H1 (cell line): ENCODE measurements at regions of chr6 and their contacts with region 1.

Region 1: GRCh38 chr6:137589067-137589848 is 95.1 kb upstream of the OLIG3 start:
- DNase-seq: peak; percentile 38 to 65
- H3K4me3 ChIP-seq: no peak overlapping the region
- H3K27ac ChIP-seq: no peak overlapping the region
- H3K4me1 ChIP-seq: peaks cover 0 to 6% (median 5%) of the 10 kb centered on the region in 4 experiments; a peak in 4 of 7 replicates
- H3K27me3 ChIP-seq: no peaks in the 10 kb centered on the region; a peak in 1 of 7 replicates
- CTCF ChIP-seq: peak; percentile 55 to 100 (median 99)
- EP300 ChIP-seq: peak in 1 of 2 experiments; percentile 75; a peak in 1 of 3 replicates
- POLR2A ChIP-seq: no peak
- RAD21 ChIP-seq: peak; percentile 95 to 97

Region 2: GRCh38 chr6:137341681-137342195 is 247.5 kb before region 1 on chr6:
- CTCF ChIA-PET with region 1: interaction called, 16 read pairs
- POLR2A ChIA-PET with region 1: no interaction called
- DNase-seq: no peak
- H3K4me3 ChIP-seq: no peak overlapping the region
- H3K27ac ChIP-seq: no peak overlapping the region
- H3K4me1 ChIP-seq: peaks cover 0 to 11% (median 3%) of the 10 kb centered on the region in 4 experiments; a peak in 4 of 7 replicates
- H3K27me3 ChIP-seq: no peaks in the 10 kb centered on the region; a peak in 1 of 7 replicates
- CTCF ChIP-seq: peak; percentile 18 to 46 (median 45); a peak in 3 of 4 replicates
- EP300 ChIP-seq: no peak
- POLR2A ChIP-seq: no peak
- RAD21 ChIP-seq: peak; percentile 47 to 52

Region 3: DNA sequence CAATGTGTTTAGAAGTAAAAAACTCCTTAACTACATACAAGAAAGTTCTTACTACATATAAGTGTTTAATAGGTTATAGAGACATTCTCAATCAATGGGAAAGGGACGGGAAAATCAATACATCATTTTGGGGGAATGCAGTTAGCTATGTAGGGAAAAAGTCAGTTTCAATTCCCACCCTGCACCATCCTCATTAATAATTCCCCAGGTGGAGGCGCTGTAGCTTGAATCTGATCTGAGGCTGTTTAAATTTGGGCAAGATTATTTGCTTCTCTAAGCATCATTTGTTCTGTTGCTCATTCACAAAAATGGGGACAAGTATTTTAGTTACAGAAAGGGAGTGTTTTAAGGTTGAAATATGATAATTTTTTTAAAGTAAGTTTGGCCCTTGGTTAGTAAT is 114.2 kb before region 1 on chr6:
- CTCF ChIA-PET with region 1: interaction called, 55 read pairs
- POLR2A ChIA-PET with region 1: no interaction called
- DNase-seq: no peak
- H3K4me3 ChIP-seq: no peak overlapping the region
- H3K27ac ChIP-seq: no peak overlapping the region
- H3K4me1 ChIP-seq: peaks cover 0 to 5% (median 3%) of the 10 kb centered on the region in 4 experiments; a peak in 4 of 7 replicates
- H3K27me3 ChIP-seq: peaks cover 0 to 1% (median 0%) of the 10 kb centered on the region in 4 experiments; a peak in 2 of 7 replicates
- CTCF ChIP-seq: peak in 2 of 3 experiments; percentile 60 to 70; a peak in 3 of 4 replicates
- EP300 ChIP-seq: no peak
- POLR2A ChIP-seq: no peak
- RAD21 ChIP-seq: peak; percentile 56 to 64

Region 4: DNA sequence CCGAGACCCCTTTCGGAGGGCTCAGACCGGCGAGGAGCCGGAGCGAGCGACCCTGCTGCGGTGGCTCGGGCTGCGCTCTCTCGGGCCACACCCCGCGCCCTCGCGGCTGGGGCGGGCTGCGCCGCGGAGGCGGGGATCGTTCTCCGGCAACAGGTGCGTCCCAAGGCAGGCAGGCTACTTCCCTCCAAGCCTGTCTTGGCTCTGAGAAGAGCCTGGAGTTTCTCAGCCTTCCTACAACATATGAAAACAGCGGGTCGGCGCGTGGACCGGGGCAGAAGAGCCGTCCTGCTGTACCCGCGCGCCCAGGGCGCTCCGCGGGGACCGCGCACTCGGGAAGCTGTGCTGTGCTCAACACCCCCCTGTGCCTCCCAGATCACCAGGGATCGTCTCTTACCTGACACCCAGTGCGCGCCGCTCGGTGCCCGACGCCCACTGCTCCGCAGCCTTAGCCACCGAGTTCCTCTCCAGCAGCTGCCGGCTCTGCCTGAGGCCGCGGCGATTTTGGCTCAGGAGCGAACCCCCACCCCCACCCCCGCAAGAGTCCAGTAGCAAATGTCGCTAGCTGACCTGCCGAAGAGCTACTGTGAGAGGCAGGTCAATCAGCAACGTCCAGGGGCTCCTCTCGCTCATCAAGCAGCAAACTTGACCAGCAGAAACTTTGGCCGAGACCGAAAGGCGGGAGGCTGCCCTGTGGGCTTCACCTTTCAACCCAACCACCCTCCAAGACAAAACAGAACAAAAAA is 91.4 kb before region 1 on chr6:
- CTCF ChIA-PET with region 1: interaction called, 55 read pairs
- POLR2A ChIA-PET with region 1: no interaction called
- DNase-seq: peak in 1 of 2 experiments; percentile 77
- H3K4me3 ChIP-seq: peak overlapping the region; percentile 38 to 62 (median 55)
- H3K27ac ChIP-seq: no peak overlapping the region
- H3K4me1 ChIP-seq: peaks cover 3 to 38% (median 16%) of the 10 kb centered on the region in 4 experiments
- H3K27me3 ChIP-seq: peaks cover 46 to 74% (median 65%) of the 10 kb centered on the region in 4 experiments
- CTCF ChIP-seq: no peak
- EP300 ChIP-seq: no peak
- POLR2A ChIP-seq: no peak
- RAD21 ChIP-seq: no peak

Region 5: DNA sequence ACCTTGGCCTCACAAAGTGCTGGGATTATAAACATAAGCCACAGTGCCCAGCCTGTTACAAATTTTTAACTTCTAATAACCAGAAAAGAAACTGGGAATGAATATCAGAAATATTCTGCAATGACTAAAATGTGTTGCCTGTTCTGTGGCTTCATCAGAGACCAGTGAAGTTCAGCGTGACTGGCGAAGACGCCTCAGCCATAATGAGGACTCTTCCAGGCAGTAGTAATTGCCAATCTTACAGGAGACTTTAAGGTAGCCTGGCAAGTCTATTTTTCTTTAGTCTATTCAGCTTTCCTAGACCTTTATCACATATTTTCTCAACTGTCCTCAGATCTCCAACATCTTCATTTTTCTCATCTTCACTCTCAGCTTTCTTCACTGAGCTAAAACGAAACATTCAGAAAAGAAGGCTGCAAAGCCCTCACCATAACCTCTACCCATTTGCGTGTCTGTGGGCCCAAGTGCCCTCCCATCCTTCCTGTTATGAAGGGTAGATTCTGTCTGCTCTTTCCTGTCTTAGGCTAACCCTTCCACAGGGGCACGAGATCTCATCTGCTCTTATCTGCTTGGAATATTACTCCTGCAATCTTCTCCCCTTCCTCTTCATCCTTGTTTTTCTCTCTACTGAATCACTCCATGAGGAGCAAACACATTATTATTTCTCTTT is 53.0 kb before region 1 on chr6:
- CTCF ChIA-PET with region 1: interaction called, 22 read pairs
- POLR2A ChIA-PET with region 1: no interaction called
- DNase-seq: no peak
- H3K4me3 ChIP-seq: no peak overlapping the region
- H3K27ac ChIP-seq: no peak overlapping the region
- H3K4me1 ChIP-seq: no peaks in the 10 kb centered on the region; a peak in 1 of 7 replicates
- H3K27me3 ChIP-seq: no peaks in the 10 kb centered on the region
- CTCF ChIP-seq: no peak
- EP300 ChIP-seq: no peak
- POLR2A ChIP-seq: no peak
- RAD21 ChIP-seq: no peak

Region 6: DNA sequence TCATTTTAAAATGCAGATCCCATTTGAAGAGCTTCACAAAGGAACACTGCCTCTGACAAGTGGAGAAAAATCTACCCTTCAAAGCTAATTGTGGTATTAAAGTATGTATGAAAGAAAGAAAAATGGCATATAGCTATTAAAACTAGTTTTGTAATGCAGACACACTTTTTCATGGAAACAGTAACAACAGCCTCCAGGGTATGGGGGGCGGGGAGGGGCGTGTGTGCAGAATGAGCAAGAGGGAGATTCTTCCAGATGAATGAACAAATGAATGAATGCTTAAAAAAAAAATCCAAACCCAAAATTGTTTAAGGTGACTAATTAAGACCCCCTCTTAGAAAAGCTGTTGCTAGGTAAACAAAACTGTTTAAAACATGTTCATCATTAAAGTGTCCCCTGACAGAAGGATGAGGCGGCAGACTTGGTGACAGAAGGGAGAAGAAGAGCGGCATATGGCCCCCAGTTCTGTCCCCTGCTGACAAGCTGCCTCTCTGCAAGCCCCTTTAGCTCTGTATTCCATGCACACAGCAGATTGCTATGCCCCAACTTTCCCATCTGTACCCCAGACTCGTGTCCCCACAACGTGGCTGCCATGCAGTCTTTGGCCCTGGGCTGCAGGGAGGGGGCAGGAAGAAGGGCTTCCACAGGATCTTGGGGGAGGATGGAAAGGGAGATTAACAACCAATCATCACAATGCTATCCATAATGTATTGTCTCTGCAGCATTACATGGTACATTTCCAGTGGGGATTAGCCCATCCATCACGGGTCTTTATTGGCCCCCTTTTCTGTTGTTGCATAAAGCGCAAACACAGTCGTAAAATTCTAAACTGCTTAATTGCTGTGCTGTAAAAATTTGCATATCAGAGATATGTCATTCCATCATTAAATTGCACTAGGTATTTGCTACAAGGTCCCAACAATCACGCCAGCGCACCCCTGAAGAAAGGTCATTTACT is 13.3 kb after region 1 on chr6:
- CTCF ChIA-PET with region 1: interaction called, 66 read pairs
- POLR2A ChIA-PET with region 1: no interaction called
- DNase-seq: no peak
- H3K4me3 ChIP-seq: no peak overlapping the region
- H3K27ac ChIP-seq: no peak overlapping the region
- H3K4me1 ChIP-seq: no peaks in the 10 kb centered on the region; a peak in 1 of 7 replicates
- H3K27me3 ChIP-seq: no peaks in the 10 kb centered on the region
- CTCF ChIP-seq: no peak
- EP300 ChIP-seq: no peak
- POLR2A ChIP-seq: no peak
- RAD21 ChIP-seq: no peak

Region 7: DNA sequence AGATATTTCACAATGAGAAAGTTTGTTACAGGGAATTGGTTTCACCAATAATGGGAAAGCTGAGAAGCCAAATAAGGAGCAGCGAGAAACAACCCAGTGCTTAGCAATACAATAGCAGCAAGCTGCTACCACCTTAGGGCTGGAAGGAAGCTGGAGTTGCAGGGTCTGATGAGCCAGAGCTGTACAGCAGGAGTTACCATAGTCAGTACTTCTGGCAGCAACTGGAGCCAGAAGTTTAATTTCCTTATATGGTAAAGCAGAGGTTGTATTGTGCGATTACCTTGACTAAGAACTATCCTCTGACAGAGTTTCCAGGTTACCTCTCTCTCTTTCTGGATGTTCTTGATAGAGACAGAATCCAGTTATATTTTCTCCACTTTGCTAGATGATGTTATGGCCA is 42.1 kb after region 1 on chr6:
- CTCF ChIA-PET with region 1: interaction called, 51 read pairs
- POLR2A ChIA-PET with region 1: no interaction called
- DNase-seq: peak in 1 of 2 experiments; percentile 13
- H3K4me3 ChIP-seq: no peak overlapping the region
- H3K27ac ChIP-seq: no peak overlapping the region
- H3K4me1 ChIP-seq: no peaks in the 10 kb centered on the region; a peak in 2 of 7 replicates
- H3K27me3 ChIP-seq: no peaks in the 10 kb centered on the region
- CTCF ChIP-seq: no peak
- EP300 ChIP-seq: no peak
- POLR2A ChIP-seq: no peak
- RAD21 ChIP-seq: no peak

Region 8: GRCh38 chr6:137707590-137708360 is 118.5 kb after region 1 on chr6:
- CTCF ChIA-PET with region 1: no interaction called
- POLR2A ChIA-PET with region 1: no interaction called
- DNase-seq: no peak
- H3K4me3 ChIP-seq: no peak overlapping the region
- H3K27ac ChIP-seq: no peak overlapping the region
- H3K4me1 ChIP-seq: no peaks in the 10 kb centered on the region
- H3K27me3 ChIP-seq: no peaks in the 10 kb centered on the region
- CTCF ChIP-seq: peak; percentile 34 to 72 (median 69)
- EP300 ChIP-seq: no peak
- POLR2A ChIP-seq: no peak
- RAD21 ChIP-seq: peak; percentile 87 to 88